H1 (cell line): ENCODE measurements at regions of chr2 and their contacts with region 1.

Region 1: DNA sequence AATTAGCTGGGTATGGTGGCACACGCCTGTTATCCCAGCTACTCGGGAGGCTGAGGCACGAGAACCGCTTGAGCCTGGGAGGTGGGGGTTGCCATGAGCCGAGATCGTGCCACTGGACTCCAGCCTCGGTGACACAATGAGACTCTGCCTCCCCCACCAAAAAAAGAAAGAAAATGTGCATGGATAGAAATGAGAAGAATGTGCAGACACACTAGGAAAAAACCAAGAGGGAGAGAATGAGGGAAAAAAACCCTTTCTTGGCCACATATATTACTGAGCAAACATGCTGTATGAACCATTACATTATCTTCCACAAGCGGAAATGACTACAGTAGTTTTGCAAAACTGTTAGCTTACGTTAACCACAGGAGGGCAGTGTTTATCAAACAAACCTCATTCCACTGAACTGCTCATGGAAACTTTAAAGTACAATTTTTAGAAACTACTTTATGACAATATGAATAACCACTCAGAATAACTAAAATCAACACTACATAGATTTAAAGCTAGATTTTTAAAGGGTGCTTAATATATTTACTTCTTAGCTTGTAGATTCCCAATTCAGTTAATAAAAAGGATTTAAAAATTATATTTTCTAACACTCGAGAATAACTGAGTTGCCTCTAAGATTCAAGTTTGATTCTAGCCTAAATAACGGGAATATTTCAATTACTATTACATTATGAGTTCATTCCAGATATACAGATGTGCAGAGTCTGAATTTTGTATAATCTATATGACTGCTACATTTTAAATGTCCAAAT is 26.4 kb downstream of the ASXL2 start:
- DNase-seq: no peak
- H3K4me3 ChIP-seq: no peak overlapping the region
- H3K27ac ChIP-seq: no peak overlapping the region
- H3K4me1 ChIP-seq: peaks cover 0 to 4% (median 3%) of the 10 kb centered on the region in 4 experiments; a peak in 3 of 7 replicates
- H3K27me3 ChIP-seq: no peaks in the 10 kb centered on the region
- CTCF ChIP-seq: peak in 2 of 3 experiments; percentile 36 to 59; a peak in 2 of 4 replicates
- EP300 ChIP-seq: no peak
- POLR2A ChIP-seq: no peak
- RAD21 ChIP-seq: peak; percentile 61

Region 2: GRCh38 chr2:25740810-25741381 is 111.0 kb before region 1 on chr2:
- CTCF ChIA-PET with region 1: no interaction called
- POLR2A ChIA-PET with region 1: no interaction called
- DNase-seq: no peak
- H3K4me3 ChIP-seq: no peak overlapping the region
- H3K27ac ChIP-seq: peak overlapping the region; percentile 33; the same call in 1 of the 2 replicates
- H3K4me1 ChIP-seq: peaks cover 0 to 15% (median 7%) of the 10 kb centered on the region in 4 experiments; a peak in 5 of 7 replicates
- H3K27me3 ChIP-seq: no peaks in the 10 kb centered on the region
- CTCF ChIP-seq: no peak
- EP300 ChIP-seq: peak in 1 of 2 experiments; percentile 67; a peak in 1 of 3 replicates
- POLR2A ChIP-seq: no peak
- RAD21 ChIP-seq: no peak

Region 3: GRCh38 chr2:25794544-25795276 is 57.2 kb before region 1 on chr2:
- CTCF ChIA-PET with region 1: no interaction called
- POLR2A ChIA-PET with region 1: no interaction called
- DNase-seq: no peak
- H3K4me3 ChIP-seq: no peak overlapping the region
- H3K27ac ChIP-seq: no peak overlapping the region
- H3K4me1 ChIP-seq: no peaks in the 10 kb centered on the region
- H3K27me3 ChIP-seq: no peaks in the 10 kb centered on the region
- CTCF ChIP-seq: no peak
- EP300 ChIP-seq: no peak
- POLR2A ChIP-seq: no peak
- RAD21 ChIP-seq: no peak

Region 4: GRCh38 chr2:25867396-25868003 is 15.6 kb after region 1 on chr2:
- CTCF ChIA-PET with region 1: interaction called, 47 read pairs
- POLR2A ChIA-PET with region 1: interaction called, 3 read pairs
- DNase-seq: no peak
- H3K4me3 ChIP-seq: no peak overlapping the region
- H3K27ac ChIP-seq: no peak overlapping the region
- H3K4me1 ChIP-seq: no peaks in the 10 kb centered on the region; a peak in 1 of 7 replicates
- H3K27me3 ChIP-seq: no peaks in the 10 kb centered on the region
- CTCF ChIP-seq: no peak
- EP300 ChIP-seq: no peak
- POLR2A ChIP-seq: no peak
- RAD21 ChIP-seq: no peak

Region 5: GRCh38 chr2:25878361-25879132 is 26.6 kb after region 1 on chr2 and contains the start of gene ASXL2:
- CTCF ChIA-PET with region 1: interaction called, 12 read pairs
- POLR2A ChIA-PET with region 1: interaction called, 4 read pairs
- DNase-seq: peak; percentile 94 to 95
- H3K4me3 ChIP-seq: peak within 1 kb of the TSS; percentile 93 to 100 (median 96)
- H3K27ac ChIP-seq: peak within 1 kb of the TSS; percentile 81
- H3K4me1 ChIP-seq: peaks cover 0 to 5% (median 4%) of the 10 kb centered on the region in 4 experiments; a peak in 4 of 7 replicates
- H3K27me3 ChIP-seq: no peaks in the 10 kb centered on the region
- CTCF ChIP-seq: no peak
- EP300 ChIP-seq: no peak
- POLR2A ChIP-seq: peak; percentile 59 to 63; a peak in 2 of 3 replicates
- RAD21 ChIP-seq: no peak; a peak in 1 of 4 replicates
- total RNA-seq, gene ASXL2: 41.3 and 42.8 TPM in 2 replicates

Region 6: DNA sequence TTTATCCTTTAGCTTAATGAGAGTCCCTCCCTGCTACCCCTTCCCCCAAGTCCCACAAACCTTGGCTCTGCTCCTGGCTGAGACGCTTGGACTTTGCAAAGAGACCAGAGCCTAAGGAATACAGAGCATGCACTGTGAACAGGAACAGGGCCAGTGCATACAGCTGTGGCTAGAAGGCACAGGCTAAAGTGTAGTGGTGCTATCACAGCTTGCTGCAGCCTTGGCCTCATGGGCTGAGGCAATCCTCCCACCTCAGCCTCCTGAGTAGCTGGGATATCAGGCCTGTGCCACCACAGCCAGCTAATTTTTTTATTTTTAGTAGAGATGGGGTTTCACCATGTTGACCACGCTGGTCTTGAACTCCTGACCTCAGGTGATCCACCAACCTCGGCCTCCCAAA is 65.9 kb after region 1 on chr2:
- CTCF ChIA-PET with region 1: interaction called, 27 read pairs
- POLR2A ChIA-PET with region 1: interaction called, 3 read pairs
- DNase-seq: no peak
- H3K4me3 ChIP-seq: no peak overlapping the region
- H3K27ac ChIP-seq: no peak overlapping the region
- H3K4me1 ChIP-seq: peaks cover 0 to 5% (median under 1%) of the 10 kb centered on the region in 4 experiments; a peak in 3 of 7 replicates
- H3K27me3 ChIP-seq: no peaks in the 10 kb centered on the region
- CTCF ChIP-seq: no peak
- EP300 ChIP-seq: no peak
- POLR2A ChIP-seq: no peak
- RAD21 ChIP-seq: no peak

Region 7: GRCh38 chr2:25951071-25951547 is 99.2 kb after region 1 on chr2:
- CTCF ChIA-PET with region 1: interaction called, 28 read pairs
- POLR2A ChIA-PET with region 1: no interaction called
- DNase-seq: peak; percentile 56 to 79
- H3K4me3 ChIP-seq: no peak overlapping the region
- H3K27ac ChIP-seq: no peak overlapping the region
- H3K4me1 ChIP-seq: 0 out of 7 replicates have a peak, but pooled peaks cover 0 to 3% (median under 1%) of the 10 kb centered on the region in 4 experiments
- H3K27me3 ChIP-seq: no peaks in the 10 kb centered on the region
- CTCF ChIP-seq: peak; percentile 89 to 96 (median 94)
- EP300 ChIP-seq: no peak
- POLR2A ChIP-seq: no peak
- RAD21 ChIP-seq: peak; percentile 97 to 98

Region 8: DNA sequence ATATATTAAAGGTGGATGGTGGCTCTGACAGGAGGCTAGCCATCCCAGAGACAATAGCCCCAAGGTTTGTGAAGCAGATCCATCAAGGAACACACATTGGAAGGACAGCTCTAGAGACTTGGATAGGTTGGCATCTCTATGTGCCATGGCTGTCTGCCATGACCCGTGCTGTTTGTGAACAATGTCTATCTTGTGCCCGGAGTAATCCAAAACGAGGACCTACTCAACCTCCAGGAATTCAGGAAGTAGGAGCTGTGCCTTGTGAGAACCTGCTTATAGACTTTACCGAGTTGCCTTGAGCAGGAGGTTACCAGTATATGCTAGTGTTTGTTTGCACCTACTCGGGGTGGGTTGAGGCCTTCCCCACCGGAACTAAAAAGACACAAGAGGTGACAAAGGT is 450.9 kb after region 1 on chr2:
- CTCF ChIA-PET with region 1: no interaction called
- POLR2A ChIA-PET with region 1: no interaction called
- DNase-seq: no peak
- H3K4me3 ChIP-seq: no peak overlapping the region
- H3K27ac ChIP-seq: no peak overlapping the region
- H3K4me1 ChIP-seq: peaks cover 8 to 17% (median 12%) of the 10 kb centered on the region in 4 experiments; a peak in 6 of 7 replicates
- H3K27me3 ChIP-seq: no peaks in the 10 kb centered on the region
- CTCF ChIP-seq: no peak
- EP300 ChIP-seq: no peak
- POLR2A ChIP-seq: no peak
- RAD21 ChIP-seq: no peak